ENCODE measurements at regions of chr10 and their contacts with region 1.

Region 1: DNA sequence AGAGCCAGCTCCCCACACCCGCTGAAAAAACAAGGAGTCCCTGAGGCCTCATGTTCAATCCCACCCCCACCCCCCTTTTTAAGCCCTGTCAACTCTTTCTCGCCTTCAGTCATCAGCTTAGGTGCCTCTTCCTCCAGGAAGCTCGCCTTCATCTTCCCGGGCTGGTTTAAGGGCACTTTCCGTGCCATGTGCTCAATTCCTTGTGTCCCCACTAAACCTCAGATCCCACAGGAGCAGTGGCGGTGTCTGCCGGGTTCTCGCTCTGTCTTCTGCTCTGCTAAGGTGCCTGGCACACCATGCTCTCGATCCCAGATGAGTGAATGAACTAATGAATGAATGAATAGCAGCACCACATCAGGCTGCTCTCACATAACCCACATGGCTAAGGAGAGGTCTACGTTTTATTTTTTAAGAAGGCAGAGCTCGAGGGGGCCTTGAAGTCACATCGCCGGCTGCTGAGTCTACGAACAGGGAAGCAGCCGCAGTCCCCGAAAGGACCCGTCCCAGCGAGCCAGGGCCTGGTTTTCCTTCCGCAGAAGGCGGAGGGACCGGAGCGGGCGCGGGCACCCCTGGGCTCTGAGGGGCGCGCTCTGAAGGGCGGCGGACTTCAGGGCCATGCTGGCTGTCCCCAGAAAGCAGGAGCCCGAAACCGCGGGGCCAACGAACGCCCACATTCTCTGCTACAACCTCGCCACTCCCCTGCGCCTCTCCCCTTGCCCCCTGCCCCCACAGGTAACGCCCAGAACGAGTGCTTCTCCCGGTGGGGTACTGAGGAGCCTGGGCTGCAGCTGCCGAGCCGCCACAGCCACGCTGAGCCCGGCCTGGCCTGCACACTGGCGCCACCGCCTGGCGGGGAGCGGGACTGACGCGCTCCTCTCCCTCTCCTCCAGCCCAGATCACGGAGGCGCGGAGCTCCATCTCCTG is 73.4 kb upstream of the KCNMA1 start:
- DNase-seq: peak; percentile 49 to 75 (median 74)
- H3K4me3 ChIP-seq: peak overlapping the region in 6 of 7 experiments; percentile 37 to 73 (median 60)
- H3K27ac ChIP-seq: no peak overlapping the region
- H3K4me1 ChIP-seq: peaks cover 0 to 7% (median 6%) of the 10 kb centered on the region in 4 experiments
- H3K27me3 ChIP-seq: peaks cover 0 to 49% (median 13%) of the 10 kb centered on the region in 5 experiments

Region 2: DNA sequence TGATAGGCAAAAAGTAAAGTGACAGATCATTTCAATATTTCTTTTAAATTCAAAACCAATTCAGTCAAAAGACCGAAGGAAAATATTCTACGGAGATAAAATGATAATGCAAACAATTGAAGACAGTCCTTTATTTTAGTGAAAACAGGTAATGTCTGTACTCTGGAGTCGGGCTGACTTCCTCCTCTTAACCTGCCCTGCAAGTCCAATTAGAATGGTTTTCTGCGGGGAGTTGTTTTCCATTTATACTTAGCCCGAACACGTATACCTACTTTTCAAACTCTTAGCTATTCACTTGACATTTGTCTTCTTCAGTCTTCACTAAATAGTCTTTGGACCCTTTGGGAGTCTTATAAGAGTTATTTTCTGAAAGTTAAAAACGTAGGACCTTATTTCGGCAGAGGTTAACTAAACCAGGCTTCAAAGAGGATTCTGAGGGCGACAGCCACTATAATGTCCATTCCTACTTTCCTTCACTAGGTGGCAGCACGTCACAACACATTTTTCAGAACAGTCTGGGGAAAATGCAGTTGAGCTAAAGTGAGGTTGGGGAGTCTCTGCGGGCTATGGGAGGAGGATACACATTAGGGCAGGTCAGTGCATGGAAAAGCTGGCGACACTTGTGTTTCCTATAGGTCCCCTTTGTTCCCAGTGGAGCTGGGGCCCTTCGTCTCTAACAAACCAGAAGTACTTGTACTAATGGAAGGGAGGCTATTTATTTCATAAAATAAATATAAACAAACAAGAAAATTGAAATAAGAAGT is 545.4 kb before region 1 on chr10:
- CTCF ChIA-PET with region 1: interaction called, 29 read pairs
- POLR2A ChIA-PET with region 1: no interaction called
- DNase-seq: peak; percentile 64 to 79 (median 67)
- H3K4me3 ChIP-seq: peak overlapping the region in 4 of 7 experiments; percentile 30 to 61 (median 34)
- H3K27ac ChIP-seq: no peak overlapping the region
- H3K4me1 ChIP-seq: peaks cover 0 to 4% (median 0%) of the 10 kb centered on the region in 4 experiments
- H3K27me3 ChIP-seq: peaks cover 0 to 11% (median 7%) of the 10 kb centered on the region in 5 experiments

Region 3: DNA sequence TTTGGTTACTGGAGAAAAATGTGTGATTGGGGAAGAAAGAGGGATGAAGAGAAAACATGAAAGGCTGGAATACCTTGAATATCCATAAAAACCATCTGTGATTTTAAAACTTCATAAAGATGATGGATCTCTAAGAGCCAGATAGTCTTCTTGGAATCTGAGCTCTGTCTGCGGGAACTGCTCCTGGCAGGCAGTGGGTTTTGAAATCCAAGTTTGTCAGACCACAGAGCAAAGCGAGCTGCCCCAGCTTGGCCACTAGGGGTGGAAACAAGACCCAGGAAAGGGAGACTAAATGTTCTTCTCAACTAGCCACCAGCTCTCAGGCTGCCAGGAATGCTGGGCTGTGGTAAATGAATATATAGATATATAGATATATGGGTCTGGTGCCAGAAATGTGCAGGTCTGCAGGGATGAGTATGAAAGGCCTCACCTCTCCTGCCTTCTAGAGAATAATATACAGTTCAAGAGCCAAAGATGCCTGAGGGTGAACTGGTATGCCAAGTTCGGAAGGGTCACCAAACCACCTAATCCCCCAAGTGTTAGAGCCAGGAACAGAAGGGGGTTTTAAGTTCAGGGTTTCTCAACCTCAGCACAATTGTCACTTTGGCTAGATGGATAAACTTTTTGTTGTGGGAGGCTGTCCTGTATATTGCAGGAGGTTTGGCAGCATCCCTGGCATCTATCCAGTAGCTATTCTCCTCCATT is 282.2 kb before region 1 on chr10:
- CTCF ChIA-PET with region 1: no interaction called
- POLR2A ChIA-PET with region 1: no interaction called
- DNase-seq: peak in 1 of 3 donors; percentile 5
- H3K4me3 ChIP-seq: no peak overlapping the region
- H3K27ac ChIP-seq: no peak overlapping the region
- H3K4me1 ChIP-seq: no peaks in the 10 kb centered on the region
- H3K27me3 ChIP-seq: peaks cover 0 to 7% (median 0%) of the 10 kb centered on the region in 5 experiments

Measured in common myeloid progenitor, CD34-positive (primary cell).